ENCODE measurements at regions of chr20 and their contacts with region 1.

Region 1: GRCh38 chr20:32789896-32790750 is 27.9 kb downstream of the DNMT3B start:
- DNase-seq: peak; percentile 60
- H3K4me3 Mint-ChIP-seq: no peak overlapping the region
- H3K27ac Mint-ChIP-seq: no peak overlapping the region
- H3K4me1 Mint-ChIP-seq: peaks cover 29% of the 10 kb centered on the region
- H3K27me3 Mint-ChIP-seq: no peaks in the 10 kb centered on the region

Region 2: GRCh38 chr20:32830437-32830836 is 40.3 kb after region 1 on chr20:
- intact Hi-C with region 1: loop called (anchors 5 kb)
- DNase-seq: no peak
- H3K4me3 Mint-ChIP-seq: no peak overlapping the region
- H3K27ac Mint-ChIP-seq: no peak overlapping the region
- H3K4me1 Mint-ChIP-seq: peaks cover 50% of the 10 kb centered on the region
- H3K27me3 Mint-ChIP-seq: no peaks in the 10 kb centered on the region

Region 3: DNA sequence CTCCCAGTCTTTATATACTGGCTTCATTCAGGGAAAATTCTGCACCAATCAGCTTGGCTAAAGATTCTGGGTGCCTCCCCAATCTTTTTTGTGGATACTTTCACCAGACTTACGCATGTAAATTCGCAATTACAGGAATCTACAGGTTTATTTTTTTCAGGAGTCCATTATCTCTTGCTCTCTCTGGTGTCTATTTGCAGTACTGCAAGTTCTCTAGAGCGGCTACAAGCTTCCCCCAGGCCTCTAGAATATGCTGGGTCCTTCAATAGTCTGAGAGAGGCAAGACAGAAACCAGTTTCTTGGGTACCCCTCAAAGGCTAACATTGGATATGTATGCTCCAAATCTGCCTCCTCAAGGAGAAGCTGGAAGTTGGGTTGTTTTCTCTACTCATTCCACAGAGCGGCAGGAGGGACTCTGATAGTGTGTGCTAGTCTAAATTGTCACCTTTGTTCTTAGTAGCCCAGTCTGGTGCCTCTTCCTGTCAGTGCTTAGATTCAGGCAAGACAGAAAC is 155.6 kb after region 1 on chr20:
- intact Hi-C with region 1: loop called (anchors 1 kb)
- DNase-seq: no peak
- H3K4me3 Mint-ChIP-seq: no peak overlapping the region
- H3K27ac Mint-ChIP-seq: peak overlapping the region; percentile 20
- H3K4me1 Mint-ChIP-seq: peaks cover 27% of the 10 kb centered on the region
- H3K27me3 Mint-ChIP-seq: peaks cover 4% of the 10 kb centered on the region

Region 4: GRCh38 chr20:33291830-33292355 is 501.8 kb after region 1 on chr20:
- intact Hi-C with region 1: loop called (anchors 1 kb)
- DNase-seq: peak; percentile 42
- H3K4me3 Mint-ChIP-seq: no peak overlapping the region
- H3K27ac Mint-ChIP-seq: no peak overlapping the region
- H3K4me1 Mint-ChIP-seq: no peaks in the 10 kb centered on the region
- H3K27me3 Mint-ChIP-seq: peaks cover 9% of the 10 kb centered on the region